Activated CD4-positive, alpha-beta memory T cell treated with anti-CD3 and anti-CD28 coated beads, Interleukin-2, amount 10 ng/mL, durations not matched to agents 7 days and 5 days (primary cell): ENCODE measurements at regions of chr17 and their contacts with region 1.

Region 1: GRCh38 chr17:8409966-8410864 is 12.6 kb upstream of the RNF222 start:
- DNase-seq: peak; percentile 77
- H3K4me3 Mint-ChIP-seq: no peak overlapping the region
- H3K27ac Mint-ChIP-seq: no peak overlapping the region
- H3K4me1 Mint-ChIP-seq: peaks cover 35% of the 10 kb centered on the region
- H3K27me3 Mint-ChIP-seq: peaks cover 17% of the 10 kb centered on the region

Region 2: GRCh38 chr17:8376271-8377067 is 33.7 kb before region 1 on chr17 and contains the start of gene KRABD2:
- CTCF ChIA-PET with region 1: interaction called, 11 read pairs
- POLR2A ChIA-PET with region 1: no interaction called
- DNase-seq: peak; percentile 90
- H3K4me3 Mint-ChIP-seq: peak within 1 kb of the TSS; percentile 75
- H3K27ac Mint-ChIP-seq: peak within 1 kb of the TSS; percentile 80
- H3K4me1 Mint-ChIP-seq: peaks cover 59% of the 10 kb centered on the region
- H3K27me3 Mint-ChIP-seq: no peaks in the 10 kb centered on the region

Region 3: GRCh38 chr17:8393420-8394241 is 16.6 kb before region 1 on chr17:
- CTCF ChIA-PET with region 1: interaction called, 14 read pairs
- POLR2A ChIA-PET with region 1: interaction called, 3 read pairs
- DNase-seq: peak; percentile 63
- H3K4me3 Mint-ChIP-seq: no peak overlapping the region
- H3K27ac Mint-ChIP-seq: peak overlapping the region; percentile 79
- H3K4me1 Mint-ChIP-seq: peaks cover 16% of the 10 kb centered on the region
- H3K27me3 Mint-ChIP-seq: peaks cover 25% of the 10 kb centered on the region

Region 4: DNA sequence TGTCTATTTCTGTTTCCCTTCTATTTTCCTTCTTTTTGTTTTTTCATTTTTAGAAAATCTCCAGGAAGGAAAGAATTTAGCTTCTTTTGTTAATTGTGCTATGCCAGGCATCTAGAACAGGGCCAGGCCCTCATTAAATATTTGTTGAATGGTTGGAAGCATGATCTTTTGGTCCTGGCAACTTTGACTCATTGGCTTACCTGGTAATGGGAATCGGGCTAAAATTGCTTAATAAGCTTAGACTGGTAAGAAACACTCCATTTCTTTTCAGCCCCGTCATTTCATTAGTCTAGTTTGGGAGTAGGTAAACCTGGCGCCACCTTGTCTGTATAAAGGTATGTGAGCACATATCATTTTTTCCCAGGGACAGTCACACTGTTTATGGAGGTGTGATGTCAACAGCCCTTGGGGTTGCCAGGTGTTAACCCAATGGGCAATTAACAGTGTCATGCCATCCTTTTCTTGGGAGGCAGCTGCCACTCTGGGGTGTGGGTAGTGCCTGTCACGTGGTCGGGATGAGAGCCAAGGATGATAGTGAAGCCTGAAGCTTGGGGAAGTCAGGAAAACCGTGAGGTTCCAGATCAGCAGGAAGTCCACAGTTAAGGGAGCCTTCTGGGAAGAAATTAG is 16.0 kb after region 1 on chr17:
- CTCF ChIA-PET with region 1: interaction called, 25 read pairs
- POLR2A ChIA-PET with region 1: no interaction called
- DNase-seq: no peak
- H3K4me3 Mint-ChIP-seq: no peak overlapping the region
- H3K27ac Mint-ChIP-seq: no peak overlapping the region
- H3K4me1 Mint-ChIP-seq: no peaks in the 10 kb centered on the region
- H3K27me3 Mint-ChIP-seq: peaks cover 25% of the 10 kb centered on the region

Region 5: DNA sequence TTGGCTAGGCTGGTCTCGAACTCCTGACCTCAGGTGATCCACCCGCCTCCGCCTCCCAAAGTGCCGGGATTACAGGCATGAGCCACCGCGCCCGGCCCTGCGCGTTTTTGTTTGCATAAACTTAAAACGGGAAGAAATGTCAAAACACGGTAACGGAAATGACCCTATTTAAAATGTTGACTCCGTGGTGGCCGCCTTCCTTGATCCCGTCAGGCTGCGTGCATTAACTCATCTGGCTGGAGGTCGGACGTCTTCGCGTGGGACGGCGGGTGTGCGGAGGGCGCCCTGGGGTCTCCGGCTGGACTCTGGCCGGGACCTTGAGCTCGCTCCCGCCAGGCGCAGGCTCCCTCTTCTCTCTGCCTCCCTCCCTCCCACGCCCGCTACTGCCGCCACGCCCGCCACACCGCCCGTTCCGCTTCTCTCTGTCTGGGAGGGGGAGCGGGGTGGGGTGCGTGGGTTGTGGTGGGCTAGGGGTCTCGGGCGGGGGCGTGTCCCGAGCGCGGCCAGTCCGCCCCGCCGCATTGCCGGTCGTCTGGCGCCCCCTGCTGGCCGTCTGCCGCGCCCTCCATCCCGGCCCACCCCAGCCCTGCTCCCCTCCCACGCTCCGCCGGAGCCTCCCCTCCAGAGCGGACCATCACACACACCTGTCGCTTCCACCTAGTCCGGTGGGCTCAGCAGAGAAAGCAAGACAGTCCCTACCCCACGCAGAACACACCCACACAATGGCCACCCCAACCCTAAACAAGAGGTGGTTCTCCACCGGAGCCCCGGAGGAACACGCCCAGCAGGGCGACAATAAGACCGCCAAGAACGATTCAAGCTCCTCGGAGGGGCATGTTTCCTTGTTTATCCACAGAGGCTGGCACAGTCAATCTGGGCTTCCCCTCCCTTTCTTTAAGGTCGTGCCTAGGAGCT is 335.6 kb after region 1 on chr17:
- CTCF ChIA-PET with region 1: interaction called, 30 read pairs
- POLR2A ChIA-PET with region 1: interaction called, 5 read pairs
- DNase-seq: peak; percentile 78
- H3K4me3 Mint-ChIP-seq: peak overlapping the region; percentile 83
- H3K27ac Mint-ChIP-seq: peak overlapping the region; percentile 86
- H3K4me1 Mint-ChIP-seq: peaks cover 12% of the 10 kb centered on the region
- H3K27me3 Mint-ChIP-seq: peaks cover 7% of the 10 kb centered on the region